HEK293 (cell line): ENCODE measurements at regions of chr2 and their contacts with region 1.

Region 1: DNA sequence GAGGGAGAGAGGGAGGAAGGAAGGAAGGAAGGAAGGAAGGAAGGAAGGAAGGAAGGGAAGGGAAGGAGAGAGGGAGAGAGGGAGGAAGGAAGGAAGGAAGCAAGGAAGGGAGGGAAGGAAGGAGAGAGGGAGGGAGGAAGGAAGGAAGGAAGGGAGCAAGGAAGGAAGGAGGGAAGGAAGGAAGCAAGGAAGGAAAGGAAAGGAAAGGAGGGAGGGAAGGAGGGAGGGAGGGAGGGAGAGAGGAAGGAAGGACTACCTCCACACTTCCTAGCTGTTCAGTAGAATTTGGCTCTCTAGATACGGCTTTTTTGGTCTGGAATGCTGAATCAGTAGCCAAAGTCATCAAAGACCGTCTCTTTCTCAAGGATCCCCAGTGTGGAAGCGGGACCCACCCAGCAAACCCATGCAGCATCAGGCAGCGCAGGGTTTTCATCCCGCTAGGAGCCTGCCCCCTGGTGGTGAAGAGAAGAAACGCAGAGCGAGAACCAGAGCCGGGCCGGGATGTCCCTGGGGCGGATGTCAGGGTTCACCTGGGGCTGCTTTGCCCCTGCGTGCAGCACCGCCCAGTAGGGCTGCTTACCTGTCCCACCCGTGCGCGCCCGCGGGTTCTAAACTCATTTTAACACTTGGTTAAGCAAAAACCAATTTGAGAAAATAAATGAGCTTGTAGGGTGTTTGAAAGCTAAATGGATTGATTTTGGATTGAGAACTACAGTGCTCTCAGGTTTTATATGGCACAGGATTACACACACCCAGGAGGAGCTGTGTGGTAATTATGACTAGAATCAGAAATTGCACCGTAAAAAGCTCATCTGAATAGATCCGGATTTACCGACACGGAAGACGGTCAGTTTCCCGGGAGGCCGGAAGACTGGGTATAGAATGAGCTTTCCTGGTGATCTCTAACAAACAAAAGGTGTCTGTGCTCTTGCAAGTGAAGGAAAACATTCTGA is 48.1 kb upstream of the ARL4C start:
- H3K4me3 ChIP-seq: no peak overlapping the region
- H3K27ac ChIP-seq: no peak overlapping the region
- H3K4me1 ChIP-seq: no peaks in the 10 kb centered on the region
- CTCF ChIP-seq: peak; percentile 73

Region 2: DNA sequence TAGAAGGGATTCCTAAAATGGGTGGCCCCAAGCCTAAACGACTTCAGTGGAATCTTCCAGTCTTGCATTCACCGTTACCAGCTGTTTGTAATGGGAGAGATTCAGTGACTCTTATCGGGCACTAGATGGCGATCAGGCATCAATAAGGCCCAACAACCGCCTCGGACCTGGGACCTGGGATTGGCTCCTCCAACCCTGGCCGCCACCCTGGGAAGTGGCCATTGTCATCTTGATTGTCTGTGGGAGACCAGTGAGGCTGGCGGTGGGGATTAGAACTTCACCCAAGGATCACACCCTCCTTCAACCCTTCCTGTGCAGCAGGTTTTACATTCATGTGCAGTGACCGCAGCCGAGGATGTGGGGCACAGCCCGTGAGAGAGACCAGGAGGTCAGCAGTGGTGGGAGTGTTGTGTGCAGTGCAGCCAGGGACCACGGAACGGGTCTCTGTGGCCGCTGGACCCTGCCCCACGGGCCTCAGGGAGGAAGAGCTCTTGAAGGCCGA is 409.2 kb before region 1 on chr2:
- CTCF ChIA-PET with region 1: interaction called, 39 read pairs
- POLR2A ChIA-PET with region 1: no interaction called
- H3K4me3 ChIP-seq: no peak overlapping the region
- H3K27ac ChIP-seq: no peak overlapping the region
- H3K4me1 ChIP-seq: no peaks in the 10 kb centered on the region
- CTCF ChIP-seq: peak; percentile 70

Region 3: GRCh38 chr2:234500394-234501006 is 44.4 kb before region 1 on chr2:
- CTCF ChIA-PET with region 1: interaction called, 11 read pairs
- POLR2A ChIA-PET with region 1: no interaction called
- H3K4me3 ChIP-seq: no peak overlapping the region
- H3K27ac ChIP-seq: no peak overlapping the region
- H3K4me1 ChIP-seq: peaks cover 12% of the 10 kb centered on the region
- CTCF ChIP-seq: no peak

Region 4: GRCh38 chr2:234555720-234556119 is 10.8 kb after region 1 on chr2:
- CTCF ChIA-PET with region 1: interaction called, 20 read pairs
- POLR2A ChIA-PET with region 1: no interaction called
- H3K4me3 ChIP-seq: no peak overlapping the region
- H3K27ac ChIP-seq: no peak overlapping the region
- H3K4me1 ChIP-seq: no peaks in the 10 kb centered on the region
- CTCF ChIP-seq: no peak

Region 5: DNA sequence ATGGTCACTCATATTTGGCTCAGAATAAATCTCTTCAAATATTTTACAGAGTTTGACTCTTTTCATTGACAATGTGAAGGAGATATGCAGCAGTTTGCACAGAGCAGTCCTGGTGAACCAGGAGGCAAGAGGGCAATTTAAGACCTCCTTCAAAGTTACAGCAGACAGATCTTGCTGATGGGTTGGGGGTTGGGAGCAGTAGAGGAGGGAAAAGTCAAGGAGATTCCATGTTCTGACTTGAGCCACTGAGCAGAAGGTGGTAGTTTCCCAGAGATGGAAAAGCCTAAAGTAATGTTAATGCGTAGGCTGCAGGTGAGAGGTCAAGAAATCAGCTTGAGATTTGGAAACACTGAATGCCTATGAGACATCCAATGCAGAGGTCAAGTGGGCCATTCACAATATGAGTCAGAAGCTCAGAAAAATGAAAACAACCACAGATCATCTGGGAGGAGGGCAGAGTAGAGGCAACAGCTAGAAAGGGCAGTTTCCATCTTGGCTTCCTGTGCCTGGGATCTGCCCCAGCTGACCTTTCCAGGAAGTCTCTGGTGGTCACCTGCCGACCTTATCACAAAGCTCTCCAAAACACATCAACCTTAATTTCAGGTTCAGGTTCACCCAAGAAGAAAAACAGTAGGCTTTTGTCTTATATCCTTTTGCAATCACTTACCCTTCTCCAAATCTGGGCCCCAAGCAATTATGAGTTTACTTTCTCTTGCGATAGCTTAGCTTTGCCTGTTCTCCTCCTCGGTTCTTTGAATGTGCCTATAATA is 149.5 kb after region 1 on chr2:
- CTCF ChIA-PET with region 1: no interaction called
- POLR2A ChIA-PET with region 1: no interaction called
- H3K4me3 ChIP-seq: no peak overlapping the region
- H3K27ac ChIP-seq: no peak overlapping the region
- H3K4me1 ChIP-seq: no peaks in the 10 kb centered on the region; the same call in 1 of the 2 replicates
- CTCF ChIP-seq: no peak

Region 6: GRCh38 chr2:235116885-235117492 is 572.1 kb after region 1 on chr2:
- CTCF ChIA-PET with region 1: interaction called, 24 read pairs
- POLR2A ChIA-PET with region 1: no interaction called
- H3K4me3 ChIP-seq: no peak overlapping the region
- H3K27ac ChIP-seq: no peak overlapping the region
- H3K4me1 ChIP-seq: no peaks in the 10 kb centered on the region
- CTCF ChIP-seq: peak; percentile 36; the same call in 1 of the 2 replicates